Activated naive CD4-positive, alpha-beta T cell treated with anti-CD3 and anti-CD28 coated beads for 36 hours (primary cell): ENCODE measurements at regions of chr20 and their contacts with region 1.

Region 1: GRCh38 chr20:3239026-3239866 is at the start of gene SLC4A11:
- DNase-seq: peak; percentile 33
- H3K4me3 Mint-ChIP-seq: peak within 1 kb of the TSS; percentile 77
- H3K27ac Mint-ChIP-seq: no peak within 1 kb of the TSS
- H3K4me1 Mint-ChIP-seq: peaks cover 6% of the 10 kb centered on the region
- H3K27me3 Mint-ChIP-seq: peaks cover 66% of the 10 kb centered on the region
- total RNA-seq, gene SLC4A11: 0.72 to 0.91 TPM

Region 2: GRCh38 chr20:3165406-3166337 is 73.6 kb before region 1 on chr20:
- CTCF ChIA-PET with region 1: no interaction called
- intact Hi-C with region 1: no loop called
- DNase-seq: no peak
- H3K4me3 Mint-ChIP-seq: no peak overlapping the region
- H3K27ac Mint-ChIP-seq: no peak overlapping the region
- H3K4me1 Mint-ChIP-seq: peaks cover 8% of the 10 kb centered on the region
- H3K27me3 Mint-ChIP-seq: peaks cover 4% of the 10 kb centered on the region

Region 3: GRCh38 chr20:3296261-3297078 is 57.2 kb after region 1 on chr20:
- CTCF ChIA-PET with region 1: no interaction called
- intact Hi-C with region 1: no loop called
- DNase-seq: no peak
- H3K4me3 Mint-ChIP-seq: no peak overlapping the region
- H3K27ac Mint-ChIP-seq: no peak overlapping the region
- H3K4me1 Mint-ChIP-seq: no peaks in the 10 kb centered on the region
- H3K27me3 Mint-ChIP-seq: no peaks in the 10 kb centered on the region

Region 4: DNA sequence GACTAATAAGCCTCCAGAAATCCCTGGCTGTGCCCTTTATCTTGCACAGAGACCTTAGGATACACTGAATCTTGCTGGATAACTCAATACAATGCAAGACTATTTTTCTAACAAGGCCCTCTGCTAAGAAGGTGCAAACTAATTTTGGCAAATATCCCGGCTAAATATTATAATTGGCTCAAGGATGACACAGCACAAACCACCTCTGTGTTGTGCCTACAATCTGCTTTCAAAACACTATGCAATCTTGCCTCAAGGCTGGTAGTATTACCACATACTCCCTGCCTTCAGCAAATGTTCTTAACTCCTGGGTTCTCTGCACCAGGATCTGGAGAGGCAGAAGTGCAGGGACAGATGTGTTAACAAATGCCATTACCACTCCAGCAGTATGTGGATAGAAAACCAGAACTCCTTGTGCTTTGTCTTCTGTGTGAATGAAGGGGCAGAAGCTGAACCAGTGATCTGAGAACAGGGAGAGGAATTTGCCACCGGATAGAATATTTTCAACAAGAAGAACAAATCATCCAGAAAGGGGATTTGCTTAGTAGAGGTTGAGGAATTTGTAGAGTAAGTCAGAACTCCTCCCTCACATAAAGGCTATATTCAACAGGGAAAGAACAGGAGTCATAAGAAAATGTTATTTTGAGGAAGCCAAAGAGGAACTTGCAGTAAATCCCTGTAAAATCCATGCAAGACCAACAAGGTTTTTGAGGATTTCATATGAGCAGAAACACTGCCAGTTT is 73.9 kb after region 1 on chr20:
- CTCF ChIA-PET with region 1: interaction called, 3 read pairs
- intact Hi-C with region 1: loop called (anchors 5 kb)
- DNase-seq: no peak
- H3K4me3 Mint-ChIP-seq: no peak overlapping the region
- H3K27ac Mint-ChIP-seq: no peak overlapping the region
- H3K4me1 Mint-ChIP-seq: no peaks in the 10 kb centered on the region
- H3K27me3 Mint-ChIP-seq: no peaks in the 10 kb centered on the region